CD14-positive monocyte (primary cell): ENCODE measurements at regions of chr20 and their contacts with region 1.

Region 1: DNA sequence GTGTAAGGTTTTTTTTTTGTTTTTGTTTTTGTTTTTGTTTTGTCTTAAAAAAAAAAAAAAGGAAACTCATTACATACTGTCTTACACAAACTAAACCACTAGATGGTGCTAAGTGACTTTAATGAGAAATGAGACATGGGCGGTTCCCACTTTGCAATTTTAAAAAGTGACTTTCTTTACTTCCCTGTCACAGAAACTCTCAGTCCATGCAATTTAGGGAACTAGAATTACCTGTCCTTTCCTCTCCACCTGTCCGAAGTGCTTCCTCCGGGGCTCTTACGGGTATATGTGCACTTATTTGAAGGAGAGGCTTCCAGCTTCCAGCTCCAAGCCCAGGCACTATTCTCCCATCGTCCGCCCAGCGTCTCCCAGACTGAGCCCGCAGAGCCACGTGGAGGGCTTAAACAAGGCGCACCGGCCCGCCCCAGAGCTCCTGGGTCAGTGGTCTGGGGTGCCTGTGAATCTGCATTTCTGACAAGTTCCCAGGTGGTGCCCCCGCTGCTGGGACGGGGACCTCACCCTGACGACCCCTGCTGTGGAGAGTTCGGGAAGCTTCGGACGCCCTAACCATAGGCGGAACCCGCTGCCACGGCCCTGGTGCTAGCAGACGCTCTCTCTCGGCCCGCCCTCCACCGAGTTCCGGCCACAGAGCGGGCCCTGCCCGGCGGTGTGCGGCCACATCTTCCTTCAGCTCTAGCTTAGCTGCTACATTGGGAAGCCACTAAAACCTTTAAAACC is 26.1 kb downstream of the BFSP1 start:
- DNase-seq: peak; percentile 57 to 76 (median 66)
- H3K4me3 ChIP-seq: peak overlapping the region; percentile 31 to 89 (median 52)
- H3K4me3 Mint-ChIP-seq: peak overlapping the region; percentile 88 to 96
- H3K27ac ChIP-seq: peak overlapping the region; percentile 3 to 60
- H3K27ac Mint-ChIP-seq: peak overlapping the region; percentile 45 to 88 (median 80)
- H3K4me1 ChIP-seq: peaks cover 15 to 20% of the 10 kb centered on the region in 2 donors
- H3K4me1 Mint-ChIP-seq: peaks cover 17% of the 10 kb centered on the region
- H3K27me3 ChIP-seq: no peaks in the 10 kb centered on the region
- H3K27me3 Mint-ChIP-seq: peaks cover 2 to 13% (median 3%) of the 10 kb centered on the region in 3 donors
- CTCF ChIP-seq: peak; percentile 70

Region 2: DNA sequence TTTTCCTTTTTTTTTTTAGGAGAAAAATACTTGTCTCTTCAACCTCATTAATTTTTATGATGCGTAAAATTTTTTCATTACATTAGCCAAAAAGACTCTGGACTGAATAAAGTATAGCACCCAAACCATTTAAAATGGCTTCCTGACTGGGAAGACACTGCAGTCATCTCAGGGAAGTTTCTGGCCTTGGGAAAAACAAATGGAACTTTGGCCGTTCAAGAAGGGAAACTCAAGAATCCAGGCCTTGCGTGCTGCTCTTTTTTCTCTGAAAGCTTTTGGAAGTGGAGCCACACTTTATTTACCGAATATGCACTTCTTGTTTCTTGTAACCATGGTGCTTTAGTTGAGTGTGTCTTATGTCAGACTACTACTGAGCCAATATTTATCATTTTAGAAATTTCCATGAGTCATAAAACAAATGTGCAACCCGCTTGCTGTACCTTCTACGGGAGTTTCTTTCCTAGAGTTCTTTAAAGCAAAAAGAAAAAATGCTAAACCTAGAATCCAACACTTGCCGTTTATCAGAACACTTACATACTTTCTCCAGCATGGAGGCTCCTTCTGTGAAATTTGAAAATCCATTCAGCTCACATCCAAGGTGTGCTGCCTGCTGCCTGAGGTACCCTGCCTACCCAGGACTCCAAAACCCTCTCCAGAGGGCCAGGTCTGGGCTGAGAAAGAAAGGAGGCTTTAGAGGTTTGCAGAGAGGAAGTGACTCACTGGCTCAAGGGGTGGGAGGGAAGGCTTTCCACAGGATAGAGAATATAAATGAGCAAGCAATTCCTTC is 53.3 kb after region 1 on chr20:
- intact Hi-C with region 1: no loop called
- DNase-seq: peak; percentile 10 to 64 (median 33)
- H3K4me3 ChIP-seq: no peak overlapping the region
- H3K4me3 Mint-ChIP-seq: no peak overlapping the region
- H3K27ac ChIP-seq: no peak overlapping the region
- H3K27ac Mint-ChIP-seq: peak overlapping the region; percentile 55 to 96 (median 87)
- H3K4me1 ChIP-seq: peaks cover 4 to 5% of the 10 kb centered on the region in 2 donors
- H3K4me1 Mint-ChIP-seq: peaks cover 9% of the 10 kb centered on the region
- H3K27me3 ChIP-seq: no peaks in the 10 kb centered on the region
- H3K27me3 Mint-ChIP-seq: no peaks in the 10 kb centered on the region
- CTCF ChIP-seq: no peak

Region 3: GRCh38 chr20:17594443-17594842 is 89.4 kb after region 1 on chr20:
- intact Hi-C with region 1: loop called in 1 of 2 experiments (anchors 5 kb)
- DNase-seq: no peak
- H3K4me3 ChIP-seq: no peak overlapping the region
- H3K4me3 Mint-ChIP-seq: no peak overlapping the region
- H3K27ac ChIP-seq: no peak overlapping the region
- H3K27ac Mint-ChIP-seq: no peak overlapping the region
- H3K4me1 ChIP-seq: no peaks in the 10 kb centered on the region
- H3K4me1 Mint-ChIP-seq: peaks cover 2% of the 10 kb centered on the region
- H3K27me3 ChIP-seq: no peaks in the 10 kb centered on the region
- H3K27me3 Mint-ChIP-seq: peaks cover 0 to 2% (median 0%) of the 10 kb centered on the region in 3 donors
- CTCF ChIP-seq: no peak

Region 4: GRCh38 chr20:17617551-17618223 is 112.6 kb after region 1 on chr20:
- intact Hi-C with region 1: loop called in 1 of 2 experiments (anchors 10 kb)
- DNase-seq: no peak
- H3K4me3 ChIP-seq: no peak overlapping the region
- H3K4me3 Mint-ChIP-seq: no peak overlapping the region
- H3K27ac ChIP-seq: no peak overlapping the region
- H3K27ac Mint-ChIP-seq: no peak overlapping the region
- H3K4me1 ChIP-seq: peaks cover 12 to 17% of the 10 kb centered on the region in 2 donors
- H3K4me1 Mint-ChIP-seq: peaks cover 10% of the 10 kb centered on the region
- H3K27me3 ChIP-seq: no peaks in the 10 kb centered on the region
- H3K27me3 Mint-ChIP-seq: no peaks in the 10 kb centered on the region
- CTCF ChIP-seq: peak; percentile 60

Region 5: GRCh38 chr20:17761604-17762003 is 256.5 kb after region 1 on chr20:
- intact Hi-C with region 1: no loop called
- DNase-seq: no peak
- H3K4me3 ChIP-seq: no peak overlapping the region
- H3K4me3 Mint-ChIP-seq: no peak overlapping the region
- H3K27ac ChIP-seq: no peak overlapping the region
- H3K27ac Mint-ChIP-seq: no peak overlapping the region
- H3K4me1 ChIP-seq: no peaks in the 10 kb centered on the region
- H3K4me1 Mint-ChIP-seq: no peaks in the 10 kb centered on the region
- H3K27me3 ChIP-seq: no peaks in the 10 kb centered on the region
- H3K27me3 Mint-ChIP-seq: peaks cover 0 to 5% (median 2%) of the 10 kb centered on the region in 3 donors
- CTCF ChIP-seq: no peak

Region 6: GRCh38 chr20:17898548-17898994 is 393.5 kb after region 1 on chr20:
- intact Hi-C with region 1: loop called (anchors 5 kb)
- DNase-seq: peak; percentile 30 to 61 (median 45)
- H3K4me3 ChIP-seq: no peak overlapping the region
- H3K4me3 Mint-ChIP-seq: no peak overlapping the region
- H3K27ac ChIP-seq: no peak overlapping the region
- H3K27ac Mint-ChIP-seq: no peak overlapping the region
- H3K4me1 ChIP-seq: peaks cover 13 to 15% of the 10 kb centered on the region in 2 donors
- H3K4me1 Mint-ChIP-seq: peaks cover 22% of the 10 kb centered on the region
- H3K27me3 ChIP-seq: peaks cover 18 to 20% of the 10 kb centered on the region in 2 donors
- H3K27me3 Mint-ChIP-seq: peaks cover 15 to 32% (median 16%) of the 10 kb centered on the region in 3 donors
- CTCF ChIP-seq: peak; percentile 94

Region 7: GRCh38 chr20:17938871-17939619 is 434.0 kb after region 1 on chr20:
- intact Hi-C with region 1: loop called in 1 of 2 experiments (anchors 10 kb)
- DNase-seq: peak; percentile 14 to 59 (median 27)
- H3K4me3 ChIP-seq: no peak overlapping the region
- H3K4me3 Mint-ChIP-seq: peak overlapping the region in 1 of 2 donors; percentile 52
- H3K27ac ChIP-seq: no peak overlapping the region
- H3K27ac Mint-ChIP-seq: peak overlapping the region in 1 of 7 donors; percentile 25
- H3K4me1 ChIP-seq: peaks cover 6 to 7% of the 10 kb centered on the region in 2 donors
- H3K4me1 Mint-ChIP-seq: peaks cover 13% of the 10 kb centered on the region
- H3K27me3 ChIP-seq: no peaks in the 10 kb centered on the region
- H3K27me3 Mint-ChIP-seq: peaks cover 0 to 2% (median 0%) of the 10 kb centered on the region in 3 donors
- CTCF ChIP-seq: peak; percentile 81

Region 8: GRCh38 chr20:17995967-17996819 is 491.1 kb after region 1 on chr20:
- intact Hi-C with region 1: loop called (anchors 5 kb)
- DNase-seq: peak; percentile 39 to 63 (median 50)
- H3K4me3 ChIP-seq: no peak overlapping the region
- H3K4me3 Mint-ChIP-seq: no peak overlapping the region
- H3K27ac ChIP-seq: no peak overlapping the region
- H3K27ac Mint-ChIP-seq: no peak overlapping the region
- H3K4me1 ChIP-seq: no peaks in the 10 kb centered on the region
- H3K4me1 Mint-ChIP-seq: peaks cover 6% of the 10 kb centered on the region
- H3K27me3 ChIP-seq: no peaks in the 10 kb centered on the region
- H3K27me3 Mint-ChIP-seq: peaks cover 0 to 1% (median 1%) of the 10 kb centered on the region in 3 donors
- CTCF ChIP-seq: peak; percentile 97

Region 9: GRCh38 chr20:18276821-18277220 is 771.8 kb after region 1 on chr20:
- intact Hi-C with region 1: loop called in 1 of 2 experiments (anchors 10 kb)
- DNase-seq: peak; percentile 30 to 45 (median 38)
- H3K4me3 ChIP-seq: no peak overlapping the region
- H3K4me3 Mint-ChIP-seq: no peak overlapping the region
- H3K27ac ChIP-seq: no peak overlapping the region
- H3K27ac Mint-ChIP-seq: no peak overlapping the region
- H3K4me1 ChIP-seq: peaks cover 0 to 6% of the 10 kb centered on the region in 2 donors
- H3K4me1 Mint-ChIP-seq: peaks cover 13% of the 10 kb centered on the region
- H3K27me3 ChIP-seq: peaks cover 0 to 5% of the 10 kb centered on the region in 2 donors
- H3K27me3 Mint-ChIP-seq: peaks cover 9 to 24% (median 14%) of the 10 kb centered on the region in 3 donors
- CTCF ChIP-seq: peak; percentile 70

Region 10: DNA sequence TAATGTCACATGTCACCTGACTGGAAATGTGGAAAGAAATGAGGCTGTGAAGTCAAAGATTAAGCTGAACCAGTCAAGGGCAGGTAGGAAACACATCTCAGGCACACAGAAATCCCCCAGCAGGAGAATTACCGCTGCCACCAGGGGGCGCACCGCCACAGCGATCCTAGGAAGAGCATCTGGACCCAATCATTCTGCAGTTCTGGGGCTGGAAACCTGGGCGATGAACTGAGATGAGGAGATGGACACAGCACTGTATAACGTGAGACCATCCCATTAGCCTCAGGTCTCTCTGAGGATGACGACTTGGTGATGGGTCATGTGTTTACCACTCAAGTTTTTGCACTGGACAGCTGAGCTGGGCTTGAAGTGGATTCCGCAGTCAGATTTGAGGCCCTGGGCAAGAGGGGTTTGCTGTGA is 1700.9 kb after region 1 on chr20:
- intact Hi-C with region 1: no loop called
- DNase-seq: peak; percentile 53 to 70 (median 69)
- H3K4me3 ChIP-seq: no peak overlapping the region
- H3K4me3 Mint-ChIP-seq: no peak overlapping the region
- H3K27ac ChIP-seq: no peak overlapping the region
- H3K27ac Mint-ChIP-seq: no peak overlapping the region
- H3K4me1 ChIP-seq: no peaks in the 10 kb centered on the region
- H3K4me1 Mint-ChIP-seq: no peaks in the 10 kb centered on the region
- H3K27me3 ChIP-seq: peaks cover 9 to 11% of the 10 kb centered on the region in 2 donors
- H3K27me3 Mint-ChIP-seq: peaks cover 7 to 17% (median 13%) of the 10 kb centered on the region in 3 donors
- CTCF ChIP-seq: peak; percentile 95